HepG2 (cell line): ENCODE measurements at regions of chr13 and their contacts with region 1.

Region 1: DNA sequence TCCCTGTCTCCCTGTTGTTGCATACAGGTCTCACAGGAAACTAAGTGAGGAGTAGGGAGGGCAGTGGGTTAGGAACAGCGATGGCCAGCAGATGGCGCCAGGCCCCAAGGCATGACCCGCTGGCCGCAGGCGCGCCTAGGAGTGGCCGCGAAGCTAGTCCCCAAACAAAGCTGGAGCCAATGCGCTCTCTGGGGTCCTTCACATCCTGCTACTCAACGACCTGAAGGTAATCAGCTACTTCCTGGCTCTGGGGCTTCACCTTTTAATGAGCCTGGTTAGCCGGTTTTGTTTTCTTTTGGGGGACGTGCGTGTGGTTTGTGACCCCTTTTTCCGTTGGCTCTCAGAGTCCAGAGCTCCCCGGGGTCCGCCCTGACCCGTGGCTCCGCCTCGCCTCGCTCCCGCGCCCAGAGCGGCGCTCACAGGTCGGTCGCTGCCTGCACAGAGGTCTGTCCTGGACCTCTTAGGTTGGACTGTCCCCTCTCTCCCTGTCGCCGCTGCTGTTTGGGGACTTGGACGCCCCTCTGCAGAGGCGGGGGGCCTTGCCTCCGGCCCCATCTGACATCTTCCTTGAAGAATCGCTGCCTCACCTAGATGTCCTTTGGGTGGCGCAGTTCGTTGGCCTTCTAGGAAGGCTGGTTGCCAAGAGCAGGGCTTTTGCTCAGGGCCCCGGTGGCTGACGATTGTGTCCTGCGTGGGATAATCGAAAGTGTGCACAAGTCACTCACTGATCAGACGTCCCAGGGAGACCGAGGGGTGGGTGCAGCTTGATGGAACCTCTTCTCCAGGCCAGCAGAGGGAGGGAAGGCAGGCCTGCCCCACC is 62.1 kb upstream of the GTF3A start:
- DNase-seq: peak; percentile 68
- ATAC-seq: peak; percentile 98
- H3K4me3 ChIP-seq: peak overlapping the region; percentile 47 to 67 (median 47)
- H3K27ac ChIP-seq: no peak overlapping the region
- H3K4me1 ChIP-seq: peaks cover 12% of the 10 kb centered on the region
- H3K27me3 ChIP-seq: peaks cover 2 to 22% of the 10 kb centered on the region in 2 experiments; a peak in 3 of 5 replicates
- CTCF ChIP-seq: peak; percentile 98
- EP300 ChIP-seq: no peak
- POLR2A ChIP-seq: no peak
- RAD21 ChIP-seq: peak; percentile 92

Region 2: DNA sequence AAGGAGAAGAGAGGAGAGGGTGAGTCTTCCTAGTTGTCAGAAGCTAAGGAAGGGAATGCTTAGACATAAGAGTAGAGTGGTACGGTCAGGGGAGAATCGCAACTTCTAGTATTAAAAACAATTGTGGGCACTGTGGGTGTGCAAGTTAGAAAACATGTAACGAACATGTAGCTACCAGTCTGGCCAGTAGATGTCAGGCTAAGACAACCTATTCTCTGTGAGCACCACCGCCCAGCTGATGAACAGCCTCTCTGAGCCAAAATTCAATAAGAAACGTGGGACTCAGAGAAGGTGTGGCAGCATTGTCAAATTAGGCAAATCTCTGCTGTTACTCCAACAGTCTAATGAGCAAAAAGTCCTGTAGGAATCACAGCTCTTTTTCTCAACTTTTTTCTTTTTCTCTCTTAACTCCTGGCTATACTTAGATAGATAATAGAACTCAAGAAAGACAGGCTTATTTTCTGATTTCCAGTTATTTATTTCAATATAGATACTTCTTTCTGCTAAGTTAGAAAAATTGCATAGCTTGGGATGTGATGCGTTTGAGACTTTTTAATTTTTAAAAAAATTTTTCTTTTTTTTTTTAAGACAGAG is 376.9 kb before region 1 on chr13:
- CTCF ChIA-PET with region 1: interaction called, 28 read pairs
- POLR2A ChIA-PET with region 1: interaction called, 3 read pairs
- in situ Hi-C with region 1: loop called (anchors 5 kb)
- intact Hi-C with region 1: loop called (anchors 1 kb)
- DNase-seq: peak; percentile 74
- ATAC-seq: peak; percentile 36
- H3K4me3 ChIP-seq: no peak overlapping the region
- H3K27ac ChIP-seq: no peak overlapping the region
- H3K4me1 ChIP-seq: peaks cover 93% of the 10 kb centered on the region
- H3K27me3 ChIP-seq: no peaks in the 10 kb centered on the region
- CTCF ChIP-seq: peak; percentile 91
- EP300 ChIP-seq: no peak
- POLR2A ChIP-seq: no peak
- RAD21 ChIP-seq: peak; percentile 87

Region 3: GRCh38 chr13:27251166-27252091 is 110.8 kb before region 1 on chr13 and contains the start of gene RPL21:
- CTCF ChIA-PET with region 1: no interaction called
- POLR2A ChIA-PET with region 1: no interaction called
- in situ Hi-C with region 1: no loop called
- intact Hi-C with region 1: loop called (anchors 5 kb)
- DNase-seq: peak; percentile 91
- ATAC-seq: peak; percentile 96
- H3K4me3 ChIP-seq: peak within 1 kb of the TSS; percentile 84 to 89 (median 85)
- H3K27ac ChIP-seq: peak within 1 kb of the TSS; percentile 92
- H3K4me1 ChIP-seq: peaks cover 38% of the 10 kb centered on the region
- H3K27me3 ChIP-seq: no peaks in the 10 kb centered on the region; a peak in 1 of 5 replicates
- CTCF ChIP-seq: no peak; the same call in 1 of the 2 replicates
- EP300 ChIP-seq: peak in 1 of 2 experiments; percentile 4; a peak in 1 of 4 replicates
- POLR2A ChIP-seq: peak; percentile 86 to 88
- RAD21 ChIP-seq: 0 out of 2 replicates have a peak, but pooled peaks have one; percentile 35
- total RNA-seq, gene RPL21: 1,234 and 1,660 TPM in 2 replicates

Region 4: DNA sequence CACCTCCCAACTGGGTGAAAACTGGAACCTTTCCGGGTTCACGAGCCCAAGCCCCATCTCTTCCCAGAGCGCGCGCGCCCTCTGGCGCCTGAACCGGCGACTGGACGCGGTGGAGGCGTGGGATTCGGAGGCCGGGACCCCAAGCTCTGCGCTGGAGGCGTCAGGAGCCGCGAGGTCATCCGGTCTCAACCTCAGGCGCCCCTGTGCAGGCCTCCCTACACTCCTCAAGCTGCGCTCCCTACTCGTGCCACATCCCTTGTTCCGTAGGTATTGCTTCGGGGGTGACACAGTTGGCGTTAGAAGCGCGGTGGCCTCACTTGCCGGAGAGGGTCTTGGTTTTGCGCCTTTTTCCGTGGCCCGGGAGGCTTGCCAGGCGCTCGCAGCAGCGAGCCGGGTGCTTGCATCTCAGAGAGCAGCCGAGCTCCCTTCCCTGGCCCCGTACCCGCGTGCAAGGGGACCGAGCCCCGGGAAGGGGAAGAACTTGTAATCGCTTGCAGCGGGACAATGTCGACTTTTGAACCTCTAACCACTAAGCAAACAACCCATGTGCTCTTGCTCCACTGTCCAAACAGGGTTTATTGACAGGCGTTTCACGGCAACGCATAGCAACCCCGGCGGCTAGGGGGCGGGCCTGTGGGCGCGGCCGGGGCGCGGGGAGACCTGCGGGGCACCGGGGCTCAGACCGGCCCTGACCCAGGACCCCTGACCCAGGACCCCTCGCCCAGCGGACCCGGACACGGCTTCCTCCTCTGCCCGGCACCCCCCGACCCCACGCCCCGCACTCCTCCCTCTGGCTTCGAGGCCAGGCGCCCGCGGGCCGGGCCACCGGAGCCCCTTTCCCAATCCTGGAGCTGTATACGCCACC is 598.3 kb after region 1 on chr13:
- CTCF ChIA-PET with region 1: no interaction called
- POLR2A ChIA-PET with region 1: no interaction called
- in situ Hi-C with region 1: no loop called
- intact Hi-C with region 1: loop called (anchors 1 kb)
- DNase-seq: peak; percentile 97
- ATAC-seq: peak; percentile 90
- H3K4me3 ChIP-seq: peak overlapping the region; percentile 55 to 77 (median 77)
- H3K27ac ChIP-seq: peak overlapping the region; percentile 98
- H3K4me1 ChIP-seq: peaks cover 61% of the 10 kb centered on the region
- H3K27me3 ChIP-seq: peaks cover 3 to 10% of the 10 kb centered on the region in 2 experiments; a peak in 2 of 5 replicates
- CTCF ChIP-seq: peak; percentile 90
- EP300 ChIP-seq: peak; percentile 87 to 94
- POLR2A ChIP-seq: peak in 1 of 2 experiments; percentile 94; a peak in 2 of 4 replicates
- RAD21 ChIP-seq: peak; percentile 81